ENCODE measurements at regions of chr7 and their contacts with region 1.

Region 1: DNA sequence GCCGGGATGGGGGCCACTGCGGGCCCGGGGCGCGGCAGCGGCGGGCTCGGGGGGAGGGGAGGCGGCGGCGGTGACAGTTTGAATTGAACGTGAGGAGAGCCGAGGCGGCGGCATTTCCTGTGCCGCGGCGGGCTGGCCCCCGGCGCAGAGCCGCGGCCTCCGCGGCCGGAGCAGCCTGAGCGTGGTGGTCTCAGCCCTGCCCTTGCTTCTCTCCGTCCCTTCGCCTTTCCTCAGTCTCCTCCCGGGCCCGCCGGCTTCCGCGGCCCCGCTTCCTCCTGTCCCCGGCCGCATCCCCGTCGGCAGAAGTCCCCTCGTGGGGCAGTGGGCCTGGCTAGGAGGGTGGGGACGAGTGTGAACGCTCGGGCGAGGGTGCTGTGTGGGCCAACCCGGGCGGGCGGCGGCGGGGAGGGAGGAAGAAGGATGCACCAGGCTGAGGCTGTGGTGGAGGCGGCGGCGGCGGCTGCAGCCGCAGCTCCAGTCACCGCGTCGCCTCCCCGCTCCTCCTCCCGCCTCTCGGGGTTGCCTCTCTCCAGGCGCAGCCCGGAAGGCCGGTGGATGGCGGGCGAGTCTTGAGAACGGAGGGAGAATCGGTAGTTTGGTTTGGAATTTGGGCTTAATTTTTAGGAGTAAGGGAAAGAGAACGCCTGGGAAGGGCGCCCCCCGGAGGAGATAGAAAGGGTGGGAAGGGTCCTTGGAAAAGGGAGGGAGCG is 690 bp downstream of the SEPTIN7 start:
- DNase-seq: peak; percentile 81
- H3K4me3 ChIP-seq: peak overlapping the region; percentile 89
- H3K27ac ChIP-seq: peak overlapping the region; percentile 90
- H3K4me1 ChIP-seq: peaks cover 47% of the 10 kb centered on the region
- CTCF ChIP-seq: peak; percentile 80

Region 2: GRCh38 chr7:35716038-35716803 is 85.3 kb before region 1 on chr7:
- CTCF ChIA-PET with region 1: interaction called, 3 read pairs
- POLR2A ChIA-PET with region 1: interaction called, 22 read pairs
- intact Hi-C with region 1: no loop called
- DNase-seq: no peak
- H3K4me3 ChIP-seq: peak overlapping the region; percentile 4
- H3K27ac ChIP-seq: peak overlapping the region; percentile 1
- H3K4me1 ChIP-seq: peaks cover 58% of the 10 kb centered on the region
- CTCF ChIP-seq: no peak

Region 3: DNA sequence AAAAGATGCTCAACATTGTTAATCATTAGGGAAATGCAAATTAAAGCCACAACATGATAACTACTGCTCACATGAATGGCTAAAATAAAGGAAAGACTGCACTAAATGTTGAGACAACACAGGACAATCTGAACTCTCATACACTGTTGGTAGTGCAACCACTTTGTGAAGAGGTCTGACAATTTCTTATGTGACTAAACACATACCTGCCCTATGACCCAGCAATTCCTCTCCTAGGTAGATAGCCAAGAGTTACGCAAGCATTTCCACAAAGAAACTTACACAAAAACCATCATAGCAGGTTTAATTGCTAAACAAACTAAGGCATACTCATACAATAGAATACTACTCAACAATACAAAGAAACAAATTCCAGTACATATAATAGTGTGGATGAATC is 64.8 kb before region 1 on chr7:
- CTCF ChIA-PET with region 1: no interaction called
- POLR2A ChIA-PET with region 1: interaction called, 196 read pairs
- intact Hi-C with region 1: no loop called
- DNase-seq: no peak
- H3K4me3 ChIP-seq: no peak overlapping the region
- H3K27ac ChIP-seq: no peak overlapping the region
- H3K4me1 ChIP-seq: peaks cover 47% of the 10 kb centered on the region
- CTCF ChIP-seq: no peak

Region 4: DNA sequence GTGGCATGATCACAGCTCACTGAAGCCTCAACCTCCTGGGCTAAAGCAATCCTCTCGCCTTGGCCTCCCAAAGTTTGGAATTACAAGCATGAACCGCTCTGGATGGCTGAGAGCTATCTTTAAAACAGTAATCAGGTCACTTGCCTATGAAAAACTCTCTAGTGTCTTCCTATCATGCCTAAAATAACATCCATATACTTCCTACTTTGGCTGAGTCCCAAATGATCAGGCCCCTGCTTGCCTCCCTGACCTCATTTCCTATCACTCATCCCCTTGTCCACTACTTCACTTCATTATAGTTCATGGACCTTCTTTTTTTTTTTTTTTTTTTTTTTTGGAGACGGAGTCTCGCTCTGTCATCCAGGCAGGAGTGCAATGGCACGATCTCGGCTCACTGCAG is 27.3 kb after region 1 on chr7:
- CTCF ChIA-PET with region 1: no interaction called
- POLR2A ChIA-PET with region 1: interaction called, 11 read pairs
- intact Hi-C with region 1: no loop called
- DNase-seq: no peak
- H3K4me3 ChIP-seq: no peak overlapping the region
- H3K27ac ChIP-seq: no peak overlapping the region
- H3K4me1 ChIP-seq: peaks cover 8% of the 10 kb centered on the region
- CTCF ChIP-seq: no peak

Region 5: GRCh38 chr7:36152756-36153570 is 351.4 kb after region 1 on chr7 and contains the start of gene EEPD1:
- CTCF ChIA-PET with region 1: no interaction called
- POLR2A ChIA-PET with region 1: no interaction called
- intact Hi-C with region 1: loop called (anchors 10 kb)
- DNase-seq: peak; percentile 97
- H3K4me3 ChIP-seq: peak within 1 kb of the TSS; percentile 76
- H3K27ac ChIP-seq: no peak within 1 kb of the TSS
- H3K4me1 ChIP-seq: peaks cover 25% of the 10 kb centered on the region
- CTCF ChIP-seq: no peak
- total RNA-seq, gene EEPD1: 1.7 and 5.1 TPM in 2 replicates